Activated CD4-positive, alpha-beta memory T cell treated with anti-CD3 and anti-CD28 coated beads for 36 hours (primary cell): ENCODE measurements at regions of chr2 and their contacts with region 1.

Region 1: DNA sequence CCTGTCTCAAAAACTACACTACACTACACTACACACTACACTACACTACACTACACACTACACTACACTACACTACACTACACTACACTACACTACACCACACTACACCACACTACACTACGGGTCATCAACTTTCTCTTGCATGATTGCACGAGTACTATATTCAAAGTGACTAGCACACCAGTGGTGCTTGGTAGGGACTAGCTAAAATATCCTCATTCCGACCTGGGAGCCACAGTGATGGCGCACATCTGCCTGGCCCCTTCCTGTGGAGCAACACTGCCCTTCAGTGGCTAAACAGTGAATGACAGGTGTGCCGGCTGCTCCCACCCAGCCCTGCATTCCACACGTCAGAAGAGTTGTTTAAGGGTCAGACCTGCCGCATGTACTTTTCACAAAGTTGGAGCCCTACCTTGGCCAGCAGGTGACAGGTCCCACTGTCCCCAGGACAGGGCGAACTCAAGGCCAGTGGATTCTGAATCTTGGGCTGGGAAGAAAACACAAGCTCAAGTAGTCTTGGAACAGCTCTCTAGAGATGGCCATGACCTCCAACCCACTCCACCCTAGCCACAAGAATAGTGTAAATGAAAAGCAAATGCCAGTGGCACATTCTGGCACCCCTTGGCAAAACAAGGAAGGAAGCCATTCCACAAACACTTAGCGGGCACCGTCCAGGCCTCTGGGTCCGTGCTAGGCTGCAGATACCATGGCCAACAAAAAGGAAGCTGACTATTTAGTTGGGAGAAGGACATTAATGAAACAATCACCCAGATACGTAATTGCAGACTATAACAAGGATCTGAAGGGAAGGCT is 79.7 kb upstream of the MSH2 start:
- DNase-seq: peak; percentile 81
- H3K4me3 Mint-ChIP-seq: no peak overlapping the region
- H3K27ac Mint-ChIP-seq: no peak overlapping the region
- H3K4me1 Mint-ChIP-seq: no peaks in the 10 kb centered on the region
- H3K27me3 Mint-ChIP-seq: peaks cover 8% of the 10 kb centered on the region

Region 2: GRCh38 chr2:46915811-46916630 is 407.2 kb before region 1 on chr2:
- CTCF ChIA-PET with region 1: interaction called, 22 read pairs
- POLR2A ChIA-PET with region 1: no interaction called
- intact Hi-C with region 1: loop called (anchors 2 kb)
- DNase-seq: peak; percentile 85
- H3K4me3 Mint-ChIP-seq: peak overlapping the region; percentile 85
- H3K27ac Mint-ChIP-seq: peak overlapping the region; percentile 80
- H3K4me1 Mint-ChIP-seq: peaks cover 46% of the 10 kb centered on the region
- H3K27me3 Mint-ChIP-seq: no peaks in the 10 kb centered on the region

Region 3: GRCh38 chr2:46935071-46935470 is 388.1 kb before region 1 on chr2:
- CTCF ChIA-PET with region 1: interaction called, 10 read pairs
- POLR2A ChIA-PET with region 1: no interaction called
- intact Hi-C with region 1: no loop called
- DNase-seq: no peak
- H3K4me3 Mint-ChIP-seq: no peak overlapping the region
- H3K27ac Mint-ChIP-seq: no peak overlapping the region
- H3K4me1 Mint-ChIP-seq: peaks cover 12% of the 10 kb centered on the region
- H3K27me3 Mint-ChIP-seq: no peaks in the 10 kb centered on the region

Region 4: DNA sequence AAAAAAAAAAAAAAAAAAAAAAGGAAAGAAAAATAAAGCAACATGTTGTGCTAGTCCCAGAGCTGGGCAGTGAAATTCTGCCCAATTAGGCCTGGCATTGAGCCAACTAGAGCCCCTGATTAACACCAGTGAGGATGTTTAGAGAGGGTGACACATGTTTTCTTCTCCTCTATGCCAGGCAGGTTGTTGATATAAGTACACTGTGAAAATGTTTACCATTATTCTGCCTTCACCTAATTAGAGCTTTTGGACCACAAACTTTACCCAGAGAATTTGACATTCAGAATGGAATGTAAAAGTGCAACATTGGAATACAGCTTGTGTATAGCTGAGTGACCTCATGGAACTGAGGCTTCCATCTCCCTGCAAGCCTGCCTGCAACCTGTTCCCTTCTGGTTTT is 16.1 kb before region 1 on chr2:
- CTCF ChIA-PET with region 1: interaction called, 11 read pairs
- POLR2A ChIA-PET with region 1: no interaction called
- intact Hi-C with region 1: no loop called
- DNase-seq: no peak
- H3K4me3 Mint-ChIP-seq: no peak overlapping the region
- H3K27ac Mint-ChIP-seq: no peak overlapping the region
- H3K4me1 Mint-ChIP-seq: no peaks in the 10 kb centered on the region
- H3K27me3 Mint-ChIP-seq: peaks cover 15% of the 10 kb centered on the region

Region 5: DNA sequence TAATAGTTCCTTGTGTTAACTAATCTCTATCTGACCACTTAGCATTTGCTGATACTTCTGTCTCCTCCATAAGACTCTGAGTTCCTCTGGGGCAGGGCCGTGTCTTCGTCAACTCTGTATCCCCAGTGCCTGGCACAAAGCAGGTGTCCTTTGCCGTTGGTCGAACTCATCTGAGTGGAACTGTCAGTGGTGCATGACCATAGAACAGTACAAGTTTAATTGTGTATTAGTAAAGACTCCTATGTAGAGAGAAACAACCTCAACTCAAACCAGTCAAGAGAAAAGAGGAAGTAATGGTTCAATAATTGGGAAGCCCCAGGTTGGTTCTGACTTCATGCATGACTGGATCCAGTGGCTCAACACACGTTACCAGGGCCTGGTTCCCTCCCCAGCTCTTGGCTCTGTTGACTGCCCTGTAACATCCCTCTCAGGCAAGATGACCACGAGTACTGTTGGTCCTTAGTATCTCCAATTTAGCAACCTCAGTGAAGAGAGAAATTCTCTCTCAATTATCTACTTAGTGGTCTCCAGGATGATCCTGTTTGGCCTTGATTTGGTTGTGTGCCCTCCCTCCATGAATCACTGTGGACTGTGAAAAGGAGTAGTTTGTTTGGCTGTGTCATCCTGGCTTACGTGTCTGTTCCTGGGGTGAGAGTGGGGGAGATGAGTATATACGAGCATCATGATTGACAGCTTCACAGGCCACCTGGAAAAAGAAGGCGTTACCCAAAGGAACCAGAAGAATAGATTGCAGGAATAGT is 401.2 kb after region 1 on chr2:
- CTCF ChIA-PET with region 1: no interaction called
- POLR2A ChIA-PET with region 1: no interaction called
- intact Hi-C with region 1: no loop called
- DNase-seq: no peak
- H3K4me3 Mint-ChIP-seq: no peak overlapping the region
- H3K27ac Mint-ChIP-seq: no peak overlapping the region
- H3K4me1 Mint-ChIP-seq: peaks cover 4% of the 10 kb centered on the region
- H3K27me3 Mint-ChIP-seq: no peaks in the 10 kb centered on the region